Right ventricle myocardium superior (tissue), 1 donor: ENCODE measurements at regions of chr1 and their contacts with region 1.

Region 1: GRCh38 chr1:175319418-175320230 is 127.0 kb upstream of the KIAA0040 start:
- DNase-seq: peak; percentile 83
- ATAC-seq: peak; percentile 89

Region 2: DNA sequence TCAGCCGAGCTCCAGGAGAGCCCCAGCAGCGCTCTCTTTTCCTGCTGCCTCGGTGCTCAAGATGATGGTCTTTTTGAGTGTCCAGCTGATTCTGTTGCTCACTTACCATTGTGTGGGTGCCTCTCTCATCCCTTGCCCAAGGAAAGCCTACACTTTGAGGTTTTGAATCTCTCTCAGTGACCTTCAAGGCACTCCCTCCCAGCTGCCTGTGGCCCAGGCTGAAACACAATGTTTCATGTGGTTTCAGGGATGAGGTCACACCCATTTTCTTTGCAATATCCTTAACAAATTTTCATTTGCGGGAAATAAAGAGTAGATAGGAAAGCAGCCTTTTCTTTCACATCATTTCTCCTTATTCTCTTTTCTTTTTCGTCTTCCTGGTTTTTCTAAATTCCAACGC is 283.8 kb before region 1 on chr1:
- intact Hi-C with region 1: loop called (anchors 10 kb)
- DNase-seq: no peak
- ATAC-seq: no peak

Region 3: GRCh38 chr1:175154629-175155472 is 164.8 kb before region 1 on chr1:
- intact Hi-C with region 1: loop called (anchors 2 kb)
- DNase-seq: peak; percentile 83
- ATAC-seq: peak; percentile 72

Region 4: DNA sequence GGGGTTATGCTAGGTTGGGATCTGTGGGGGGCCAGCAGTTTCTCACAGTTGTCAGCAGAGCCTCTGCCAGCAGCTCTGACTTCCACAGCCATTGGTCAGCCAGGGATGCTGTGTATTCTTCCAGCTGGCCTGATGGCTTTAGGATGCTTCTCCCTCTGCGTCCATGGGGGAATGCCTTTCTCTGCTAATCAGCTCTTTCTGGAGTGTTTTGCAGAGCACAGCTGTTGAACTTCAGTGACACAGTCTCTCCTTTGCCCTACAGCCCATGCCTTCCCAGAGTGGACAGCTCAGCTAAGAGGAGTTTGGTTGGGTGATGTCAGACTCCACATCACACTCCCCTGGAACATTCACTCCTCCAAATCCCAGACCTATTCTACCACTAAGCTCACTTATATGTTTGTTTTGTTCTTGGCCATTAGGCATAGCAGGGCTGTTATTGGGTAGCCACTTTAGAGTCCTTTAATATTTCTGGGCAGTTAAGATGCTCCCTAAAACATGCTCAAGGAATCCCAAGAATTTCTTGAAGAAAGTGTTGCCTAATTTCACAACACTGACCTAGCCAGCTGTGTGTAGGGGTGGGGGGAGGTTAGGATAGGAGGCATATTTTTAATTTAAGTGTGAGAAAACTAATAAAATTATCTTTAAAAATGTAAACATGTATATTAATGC is 51.8 kb before region 1 on chr1:
- intact Hi-C with region 1: no loop called
- DNase-seq: peak; percentile 78
- ATAC-seq: peak; percentile 92

Region 5: GRCh38 chr1:175656416-175656815 is 336.8 kb after region 1 on chr1:
- intact Hi-C with region 1: no loop called
- DNase-seq: no peak
- ATAC-seq: no peak